ENCODE measurements at regions of chr5 and their contacts with region 1.

Region 1: GRCh38 chr5:149367249-149367971 is 9.6 kb downstream of the PCYOX1L start:
- DNase-seq: peak in 40 of 42 donors; percentile 23 to 80 (median 59)

Region 2: GRCh38 chr5:149317281-149318048 is 49.9 kb before region 1 on chr5:
- intact Hi-C with region 1: loop called (anchors 10 kb)
- DNase-seq: peak in 26 of 42 donors; percentile 18 to 74 (median 41)

Region 3: GRCh38 chr5:149576021-149576420 is 208.6 kb after region 1 on chr5:
- intact Hi-C with region 1: loop called (anchors 10 kb)
- DNase-seq: no peak

Region 4: DNA sequence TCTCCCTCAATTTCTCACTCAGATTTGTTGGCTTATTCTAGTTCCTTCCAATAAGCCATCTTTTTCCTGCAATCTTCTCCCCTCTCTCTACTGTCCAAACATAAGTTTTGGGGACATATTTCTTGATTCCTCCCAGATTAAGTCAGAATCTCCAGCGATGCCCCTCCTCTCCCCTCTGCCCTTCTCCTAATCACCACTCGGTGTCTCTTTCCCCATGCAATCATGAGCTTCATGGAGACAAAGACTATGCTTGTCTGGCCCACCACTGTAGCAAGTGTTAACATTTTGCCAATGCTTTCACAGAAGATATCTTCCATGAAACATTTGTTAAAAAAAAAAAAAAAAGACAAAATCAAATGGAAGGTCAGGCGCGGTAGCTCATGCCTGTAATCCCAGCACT is 534.8 kb after region 1 on chr5:
- intact Hi-C with region 1: no loop called
- DNase-seq: no peak

Measured in head of caudate nucleus (tissue), 42 donors.